Adrenal gland (tissue), 19 donors: ENCODE measurements at regions of chr7 and their contacts with region 1.

Region 1: GRCh38 chr7:137816696-137817320 is 30.0 kb downstream of the DGKI start:
- DNase-seq: peak in 3 of 7 donors; percentile 13 to 26 (median 24)
- H3K4me3 ChIP-seq: no peak overlapping the region
- H3K27ac ChIP-seq: no peak overlapping the region
- H3K4me1 ChIP-seq: no peaks in the 10 kb centered on the region
- H3K27me3 ChIP-seq: no peaks in the 10 kb centered on the region
- CTCF ChIP-seq: peak in 5 of 6 experiments; percentile 24 to 54 (median 49)
- POLR2A ChIP-seq: no peak

Region 2: DNA sequence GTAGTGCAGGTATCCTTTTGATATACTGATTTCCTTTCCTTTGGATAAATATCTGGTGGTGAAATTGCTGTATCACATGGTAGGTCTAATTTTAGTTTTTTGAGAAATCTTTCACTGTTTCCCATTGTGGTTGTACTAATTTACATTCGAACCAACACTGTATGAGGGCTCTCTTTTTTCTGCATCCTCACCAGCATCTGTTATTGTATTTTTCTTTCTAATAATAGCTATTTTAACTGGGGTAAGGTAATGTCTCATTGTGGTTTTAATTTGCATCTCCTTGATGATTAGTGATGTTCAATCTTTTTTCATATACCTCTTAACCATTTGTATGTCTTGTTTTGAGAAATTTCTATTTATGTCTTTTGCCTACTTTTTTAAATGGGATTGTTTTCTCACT is 1504.2 kb before region 1 on chr7:
- intact Hi-C with region 1: no loop called
- DNase-seq: no peak
- H3K4me3 ChIP-seq: no peak overlapping the region
- H3K27ac ChIP-seq: no peak overlapping the region
- H3K4me1 ChIP-seq: no peaks in the 10 kb centered on the region
- H3K27me3 ChIP-seq: no peaks in the 10 kb centered on the region
- CTCF ChIP-seq: no peak
- POLR2A ChIP-seq: no peak

Region 3: DNA sequence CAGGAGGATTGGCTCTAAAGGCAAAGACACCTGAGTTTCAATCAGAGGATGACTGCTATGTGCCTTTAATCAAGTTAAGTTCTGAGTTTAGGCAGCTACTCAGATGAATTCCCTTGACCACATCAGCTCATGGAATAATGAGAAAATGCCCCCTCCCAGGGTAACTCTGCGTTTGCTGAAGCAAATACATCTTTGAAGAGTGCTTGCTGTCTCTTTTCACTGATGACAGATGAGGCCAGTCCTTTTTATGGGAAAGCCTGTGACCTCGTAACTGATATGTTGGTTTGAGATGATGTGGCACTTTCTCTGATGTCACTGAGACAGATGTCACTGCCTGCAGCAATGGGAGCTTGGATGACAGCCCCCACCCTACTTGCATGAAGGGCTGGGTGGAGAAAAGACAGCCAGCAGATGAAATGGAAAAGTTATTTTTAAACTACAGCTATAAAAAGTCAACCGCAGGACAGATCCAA is 73.7 kb after region 1 on chr7:
- intact Hi-C with region 1: loop called (anchors 5 to 10 kb)
- DNase-seq: no peak
- H3K4me3 ChIP-seq: no peak overlapping the region
- H3K27ac ChIP-seq: no peak overlapping the region
- H3K4me1 ChIP-seq: peaks cover 0 to 14% of the 10 kb centered on the region in 2 donors
- H3K27me3 ChIP-seq: no peaks in the 10 kb centered on the region
- CTCF ChIP-seq: no peak
- POLR2A ChIP-seq: no peak

Region 4: DNA sequence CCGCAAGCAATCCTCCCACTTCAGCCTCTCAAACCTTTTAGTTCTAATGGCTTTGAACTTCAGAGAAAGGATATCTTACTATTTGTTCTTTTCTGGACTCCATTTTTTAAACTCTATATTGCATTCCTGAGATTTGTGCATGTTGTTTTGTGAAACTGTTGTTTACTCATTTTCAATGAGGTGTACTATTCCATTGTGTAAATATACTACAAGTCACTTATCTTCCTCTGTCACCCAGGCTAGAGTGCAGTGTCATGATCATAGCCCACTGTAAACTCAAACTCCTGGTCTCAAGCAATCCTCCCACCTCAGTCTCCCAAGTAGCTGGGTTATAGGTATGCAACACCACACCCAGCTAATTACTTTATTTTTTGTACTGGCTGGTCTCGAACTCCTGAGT is 228.1 kb after region 1 on chr7:
- intact Hi-C with region 1: no loop called
- DNase-seq: no peak
- H3K4me3 ChIP-seq: no peak overlapping the region
- H3K27ac ChIP-seq: no peak overlapping the region
- H3K4me1 ChIP-seq: no peaks in the 10 kb centered on the region
- H3K27me3 ChIP-seq: no peaks in the 10 kb centered on the region
- CTCF ChIP-seq: no peak
- POLR2A ChIP-seq: no peak